Activated CD4-positive, alpha-beta T cell treated with anti-CD3 and anti-CD28 coated beads, Interleukin-2, amount 10 ng/mL, durations not matched to agents 24 days and 14 days (primary cell): ENCODE measurements at regions of chrX and their contacts with region 1.

Region 1: GRCh38 chrX:130268500-130269170 is at the start of gene ZNF280C:
- DNase-seq: peak; percentile 96
- H3K4me3 Mint-ChIP-seq: peak within 1 kb of the TSS; percentile 86
- H3K27ac Mint-ChIP-seq: peak within 1 kb of the TSS; percentile 88
- H3K4me1 Mint-ChIP-seq: peaks cover 11% of the 10 kb centered on the region
- H3K27me3 Mint-ChIP-seq: peaks cover 6% of the 10 kb centered on the region
- total RNA-seq, gene ZNF280C: 6.0 and 7.5 TPM in 2 replicates

Region 2: DNA sequence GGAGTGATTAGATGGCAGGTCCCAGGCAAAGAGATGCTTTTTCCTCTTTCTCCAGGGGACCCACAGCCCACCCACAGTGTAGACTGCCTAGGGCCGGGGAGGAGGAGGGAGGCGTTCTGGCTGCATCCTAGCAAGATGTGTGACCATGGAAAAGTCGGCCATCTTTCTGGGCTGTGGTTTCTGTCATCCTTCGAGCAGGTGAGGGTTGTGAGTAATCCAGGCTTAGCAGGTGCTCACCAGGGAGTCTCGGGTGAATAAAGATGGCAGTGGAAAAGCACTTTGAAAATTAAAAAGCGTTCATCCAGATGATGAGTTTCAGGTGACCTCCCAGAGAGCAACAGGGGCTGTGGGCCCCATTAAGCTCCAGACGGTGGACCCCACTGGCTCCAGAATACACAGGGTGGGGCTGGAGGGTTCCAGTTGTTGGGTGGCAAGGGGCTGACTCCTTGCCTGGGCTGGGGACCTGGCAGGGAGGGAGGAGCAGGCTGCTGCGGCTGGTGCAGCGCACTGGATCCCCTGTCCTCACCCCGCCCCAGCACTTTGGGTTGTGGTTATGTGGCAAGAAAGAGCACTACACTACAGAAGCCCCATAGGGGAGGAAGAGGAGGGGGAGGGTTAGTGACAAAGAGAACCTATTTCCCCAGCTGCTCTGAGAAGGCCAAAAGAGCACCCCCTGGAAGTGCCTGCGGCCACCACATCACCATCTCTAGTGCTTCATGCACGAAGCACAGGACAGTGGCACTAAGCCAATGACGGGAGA is 182.0 kb before region 1 on chrX:
- intact Hi-C with region 1: loop called (anchors 2 kb)
- DNase-seq: peak; percentile 91
- H3K4me3 Mint-ChIP-seq: peak overlapping the region; percentile 86
- H3K27ac Mint-ChIP-seq: peak overlapping the region; percentile 93
- H3K4me1 Mint-ChIP-seq: peaks cover 51% of the 10 kb centered on the region
- H3K27me3 Mint-ChIP-seq: no peaks in the 10 kb centered on the region

Region 3: GRCh38 chrX:130165703-130166502 is 102.7 kb before region 1 on chrX and contains the start of gene AIFM1:
- intact Hi-C with region 1: loop called (anchors 2 kb)
- DNase-seq: peak; percentile 96
- H3K4me3 Mint-ChIP-seq: peak within 1 kb of the TSS; percentile 96
- H3K27ac Mint-ChIP-seq: peak within 1 kb of the TSS; percentile 98
- H3K4me1 Mint-ChIP-seq: peaks cover 23% of the 10 kb centered on the region
- H3K27me3 Mint-ChIP-seq: no peaks in the 10 kb centered on the region
- total RNA-seq, gene AIFM1: 44.4 and 47.7 TPM in 2 replicates

Region 4: DNA sequence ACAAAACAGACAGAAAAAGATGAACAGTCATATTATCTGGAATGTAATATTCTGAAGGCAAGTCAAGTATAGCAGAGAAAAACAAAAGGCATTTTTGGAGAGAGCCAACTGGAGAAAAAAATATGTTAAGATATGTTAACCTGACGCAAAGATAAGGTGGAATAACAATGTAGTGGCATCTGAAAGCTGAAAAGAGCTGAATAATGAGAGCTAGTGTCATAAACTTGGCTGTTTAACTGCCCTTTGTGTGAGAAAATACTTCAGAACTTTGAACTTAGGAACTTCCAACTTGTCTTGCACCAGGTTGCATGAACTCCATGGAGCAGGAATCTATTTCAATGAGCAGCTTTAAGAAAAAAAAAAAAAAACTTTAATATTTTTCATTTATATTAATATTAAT is 64.0 kb before region 1 on chrX:
- intact Hi-C with region 1: no loop called
- DNase-seq: no peak
- H3K4me3 Mint-ChIP-seq: no peak overlapping the region
- H3K27ac Mint-ChIP-seq: no peak overlapping the region
- H3K4me1 Mint-ChIP-seq: no peaks in the 10 kb centered on the region
- H3K27me3 Mint-ChIP-seq: no peaks in the 10 kb centered on the region

Region 5: GRCh38 chrX:130216320-130216719 is 52.3 kb before region 1 on chrX:
- intact Hi-C with region 1: loop called (anchors 2 kb)
- DNase-seq: no peak
- H3K4me3 Mint-ChIP-seq: no peak overlapping the region
- H3K27ac Mint-ChIP-seq: no peak overlapping the region
- H3K4me1 Mint-ChIP-seq: peaks cover 20% of the 10 kb centered on the region
- H3K27me3 Mint-ChIP-seq: no peaks in the 10 kb centered on the region

Region 6: DNA sequence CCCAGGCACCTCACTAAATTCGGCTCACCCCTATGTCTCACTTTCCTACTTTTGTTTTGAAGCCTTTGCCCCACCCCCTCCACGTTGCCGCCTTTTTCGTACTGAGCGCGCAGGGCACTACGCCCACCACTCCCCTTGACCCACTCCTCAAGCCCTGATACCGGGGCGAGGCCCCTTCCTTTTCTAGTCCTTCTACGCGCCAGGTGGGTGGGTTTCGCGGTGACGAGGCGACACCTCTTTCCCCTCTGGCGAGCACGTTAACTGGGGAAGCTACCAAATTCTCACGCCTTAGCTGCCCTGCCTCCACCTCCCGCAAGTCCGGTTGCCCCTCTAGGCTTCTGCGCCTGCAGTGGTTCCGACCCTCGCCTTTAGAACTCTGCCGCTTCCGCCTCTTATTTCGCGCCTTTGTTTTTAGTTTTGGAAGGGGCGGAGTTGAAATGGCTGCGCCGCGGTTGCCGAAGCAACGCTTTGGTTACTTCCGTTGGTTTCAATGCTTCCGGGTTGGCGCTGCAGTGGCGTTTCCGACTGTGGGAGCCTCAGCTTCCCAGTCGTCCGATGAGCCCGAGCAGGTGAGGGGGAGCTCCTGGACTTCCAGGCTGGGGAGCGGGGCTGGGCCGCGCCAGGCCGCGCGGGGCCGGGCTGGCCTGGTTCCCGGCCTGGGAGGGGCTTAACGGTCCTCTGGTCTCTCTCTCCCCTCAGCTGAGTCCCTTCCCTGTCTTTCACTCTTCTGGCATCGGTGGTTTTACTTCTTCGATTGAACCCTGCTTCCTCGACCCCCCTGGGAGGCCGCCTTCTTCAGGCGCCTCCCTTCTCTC is 71.0 kb after region 1 on chrX and contains the start of gene SLC25A14:
- intact Hi-C with region 1: loop called (anchors 1 kb)
- DNase-seq: peak; percentile 92
- H3K4me3 Mint-ChIP-seq: peak within 1 kb of the TSS; percentile 95
- H3K27ac Mint-ChIP-seq: peak within 1 kb of the TSS; percentile 95
- H3K4me1 Mint-ChIP-seq: peaks cover 16% of the 10 kb centered on the region
- H3K27me3 Mint-ChIP-seq: no peaks in the 10 kb centered on the region
- total RNA-seq, gene SLC25A14: 9.1 and 11.9 TPM in 2 replicates